CD8-positive, alpha-beta T cell (primary cell): ENCODE measurements at regions of chr7 and their contacts with region 1.

Region 1: GRCh38 chr7:322111-322671 is 32.2 kb downstream of the FOXL3 start:
- DNase-seq: peak; percentile 73 to 94 (median 86)
- ATAC-seq: peak; percentile 100
- H3K4me3 ChIP-seq: no peak overlapping the region
- H3K4me3 Mint-ChIP-seq: no peak overlapping the region
- H3K27ac ChIP-seq: no peak overlapping the region
- H3K27ac Mint-ChIP-seq: no peak overlapping the region
- H3K4me1 ChIP-seq: peaks cover 4% of the 10 kb centered on the region
- H3K4me1 Mint-ChIP-seq: no peaks in the 10 kb centered on the region
- H3K27me3 ChIP-seq: no peaks in the 10 kb centered on the region
- H3K27me3 Mint-ChIP-seq: peaks cover 27% of the 10 kb centered on the region
- CTCF ChIP-seq: peak; percentile 82

Region 2: GRCh38 chr7:119392-120163 is 202.6 kb before region 1 on chr7:
- CTCF ChIA-PET with region 1: no interaction called
- POLR2A ChIA-PET with region 1: no interaction called
- intact Hi-C with region 1: no loop called
- DNase-seq: no peak
- ATAC-seq: no peak
- H3K4me3 ChIP-seq: no peak overlapping the region
- H3K4me3 Mint-ChIP-seq: no peak overlapping the region
- H3K27ac ChIP-seq: no peak overlapping the region
- H3K27ac Mint-ChIP-seq: no peak overlapping the region
- H3K4me1 ChIP-seq: no peaks in the 10 kb centered on the region
- H3K4me1 Mint-ChIP-seq: no peaks in the 10 kb centered on the region
- H3K27me3 ChIP-seq: peaks cover 0 to 2% of the 10 kb centered on the region in 2 experiments
- H3K27me3 Mint-ChIP-seq: peaks cover 26% of the 10 kb centered on the region
- CTCF ChIP-seq: no peak

Region 3: DNA sequence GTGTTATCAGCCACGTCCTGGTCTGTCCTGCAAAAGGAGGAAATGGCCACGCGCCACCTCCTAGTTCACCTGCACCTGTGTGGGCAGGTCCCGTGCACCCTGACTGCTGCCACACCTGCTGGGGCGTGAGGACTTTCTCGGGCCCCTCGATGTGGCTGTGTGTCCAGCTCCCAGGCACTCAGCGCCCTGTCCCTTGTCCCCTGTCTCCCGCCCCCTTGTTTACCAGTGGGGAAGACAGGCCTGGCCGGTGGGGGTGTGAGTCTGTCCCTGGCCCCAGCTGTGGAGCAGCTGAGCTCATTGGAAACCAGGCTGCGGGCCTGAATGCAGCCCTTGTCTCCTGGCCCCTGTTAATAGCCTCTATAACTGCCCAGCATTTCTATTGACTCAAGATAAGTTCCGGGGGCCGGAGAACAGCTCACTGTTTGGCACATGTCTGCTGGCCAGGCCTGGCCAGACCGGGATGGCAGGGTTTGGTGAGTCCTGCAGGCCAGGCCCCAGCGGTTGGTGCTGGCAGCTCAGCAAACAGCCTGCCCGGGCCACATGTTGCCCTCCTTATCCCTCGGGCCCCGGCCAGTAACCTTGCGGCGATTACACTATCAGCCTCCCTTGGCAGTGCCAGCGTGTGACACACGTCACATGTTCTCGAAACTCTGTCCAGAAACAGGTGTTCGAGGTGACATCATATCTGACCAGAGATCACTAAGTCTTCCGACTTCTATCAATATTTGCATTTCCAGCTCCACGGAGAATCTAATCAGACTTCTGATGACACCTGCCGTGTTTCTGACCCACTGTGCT is 19.8 kb after region 1 on chr7:
- CTCF ChIA-PET with region 1: no interaction called
- POLR2A ChIA-PET with region 1: no interaction called
- intact Hi-C with region 1: no loop called
- DNase-seq: no peak
- ATAC-seq: no peak
- H3K4me3 ChIP-seq: no peak overlapping the region
- H3K4me3 Mint-ChIP-seq: no peak overlapping the region
- H3K27ac ChIP-seq: no peak overlapping the region
- H3K27ac Mint-ChIP-seq: no peak overlapping the region
- H3K4me1 ChIP-seq: peaks cover 7% of the 10 kb centered on the region
- H3K4me1 Mint-ChIP-seq: peaks cover 4% of the 10 kb centered on the region
- H3K27me3 ChIP-seq: no peaks in the 10 kb centered on the region
- H3K27me3 Mint-ChIP-seq: no peaks in the 10 kb centered on the region
- CTCF ChIP-seq: no peak

Region 4: GRCh38 chr7:636396-636795 is 314.2 kb after region 1 on chr7:
- CTCF ChIA-PET with region 1: interaction called, 5 read pairs
- POLR2A ChIA-PET with region 1: no interaction called
- intact Hi-C with region 1: loop called in 1 of 2 experiments (anchors 1 kb)
- DNase-seq: peak in 8 of 9 experiments; percentile 33 to 74 (median 62)
- ATAC-seq: peak; percentile 79
- H3K4me3 ChIP-seq: no peak overlapping the region
- H3K4me3 Mint-ChIP-seq: no peak overlapping the region
- H3K27ac ChIP-seq: no peak overlapping the region
- H3K27ac Mint-ChIP-seq: no peak overlapping the region
- H3K4me1 ChIP-seq: peaks cover 8% of the 10 kb centered on the region
- H3K4me1 Mint-ChIP-seq: peaks cover 16% of the 10 kb centered on the region
- H3K27me3 ChIP-seq: no peaks in the 10 kb centered on the region
- H3K27me3 Mint-ChIP-seq: no peaks in the 10 kb centered on the region
- CTCF ChIP-seq: peak; percentile 35

Region 5: GRCh38 chr7:726084-726853 is 404.1 kb after region 1 on chr7 and contains the start of gene DNAAF5:
- CTCF ChIA-PET with region 1: interaction called, 4 read pairs
- POLR2A ChIA-PET with region 1: no interaction called
- intact Hi-C with region 1: loop called in 1 of 2 experiments (anchors 2 kb)
- DNase-seq: peak; percentile 69 to 91 (median 86)
- ATAC-seq: peak; percentile 87
- H3K4me3 ChIP-seq: peak within 1 kb of the TSS; percentile 65 to 77
- H3K4me3 Mint-ChIP-seq: peak within 1 kb of the TSS; percentile 79
- H3K27ac ChIP-seq: peak within 1 kb of the TSS; percentile 65 to 67
- H3K27ac Mint-ChIP-seq: peak within 1 kb of the TSS; percentile 75
- H3K4me1 ChIP-seq: peaks cover 14% of the 10 kb centered on the region
- H3K4me1 Mint-ChIP-seq: peaks cover 17% of the 10 kb centered on the region
- H3K27me3 ChIP-seq: no peaks in the 10 kb centered on the region
- H3K27me3 Mint-ChIP-seq: no peaks in the 10 kb centered on the region
- CTCF ChIP-seq: no peak
- total RNA-seq, gene DNAAF5: 4.3 to 4.9 TPM

Region 6: GRCh38 chr7:774161-775109 is 452.2 kb after region 1 on chr7:
- CTCF ChIA-PET with region 1: interaction called, 53 read pairs
- POLR2A ChIA-PET with region 1: no interaction called
- intact Hi-C with region 1: loop called (anchors 1 kb)
- DNase-seq: peak; percentile 32 to 80 (median 61)
- ATAC-seq: peak; percentile 93
- H3K4me3 ChIP-seq: no peak overlapping the region
- H3K4me3 Mint-ChIP-seq: no peak overlapping the region
- H3K27ac ChIP-seq: no peak overlapping the region
- H3K27ac Mint-ChIP-seq: no peak overlapping the region
- H3K4me1 ChIP-seq: no peaks in the 10 kb centered on the region
- H3K4me1 Mint-ChIP-seq: no peaks in the 10 kb centered on the region
- H3K27me3 ChIP-seq: no peaks in the 10 kb centered on the region
- H3K27me3 Mint-ChIP-seq: no peaks in the 10 kb centered on the region
- CTCF ChIP-seq: peak; percentile 93